ENCODE measurements at regions of chr6 and their contacts with region 1.

Region 1: DNA sequence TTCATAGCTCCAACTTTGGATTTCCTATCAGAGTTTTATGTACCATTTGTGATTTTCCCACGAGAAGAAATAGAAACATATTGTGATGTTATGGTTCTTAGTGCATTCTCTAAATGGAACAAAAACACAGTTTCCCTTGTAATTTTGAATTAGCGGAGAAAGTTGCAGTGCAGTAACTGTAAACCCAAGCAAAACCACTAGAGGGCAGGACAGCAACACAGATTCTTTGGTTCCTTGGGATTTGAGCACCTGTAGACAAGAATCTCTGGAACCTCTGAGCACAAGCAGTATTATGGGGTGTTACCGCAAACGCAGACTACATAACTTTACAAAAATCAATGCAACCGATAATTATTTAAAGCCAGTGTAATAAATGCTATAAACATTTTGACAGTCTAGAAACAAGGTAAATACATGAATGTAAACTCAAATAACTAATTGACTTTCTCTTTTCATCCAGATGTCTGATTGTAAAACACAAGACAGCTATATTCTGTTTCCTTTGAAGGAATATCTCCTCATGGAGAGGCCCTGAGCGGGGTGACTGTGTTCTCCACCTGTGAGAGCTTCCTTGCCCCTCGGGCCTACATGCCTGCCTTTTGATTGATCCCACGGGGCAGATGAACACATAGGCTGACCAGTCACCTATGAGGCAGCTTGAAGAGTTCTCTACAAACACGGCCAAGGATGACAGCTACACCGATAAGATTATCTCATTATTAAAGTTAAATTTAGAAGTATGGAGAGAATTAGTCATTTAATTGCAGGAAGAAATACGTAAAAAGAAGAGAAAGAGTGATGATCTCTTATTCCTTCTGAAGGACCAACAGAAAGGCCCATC is 67.5 kb upstream of the COL21A1 start:
- DNase-seq: no peak
- H3K4me3 ChIP-seq: no peak overlapping the region
- H3K27ac ChIP-seq: no peak overlapping the region
- H3K4me1 ChIP-seq: peaks cover 0 to 9% (median 0%) of the 10 kb centered on the region in 4 donors
- H3K27me3 ChIP-seq: no peaks in the 10 kb centered on the region
- CTCF ChIP-seq: peak; percentile 38 to 68 (median 64)
- EP300 ChIP-seq: no peak
- POLR2A ChIP-seq: no peak

Region 2: GRCh38 chr6:56246881-56247653 is 67.8 kb before region 1 on chr6 and contains the start of gene COL21A1:
- in situ Hi-C with region 1: no loop called
- intact Hi-C with region 1: no loop called
- DNase-seq: peak; percentile 17
- H3K4me3 ChIP-seq: peak within 1 kb of the TSS; percentile 8 to 46 (median 28)
- H3K27ac ChIP-seq: peak within 1 kb of the TSS; percentile 6 to 65 (median 33)
- H3K4me1 ChIP-seq: peaks cover 0 to 13% (median 13%) of the 10 kb centered on the region in 4 donors
- H3K27me3 ChIP-seq: peaks cover 10% of the 10 kb centered on the region
- CTCF ChIP-seq: no peak
- EP300 ChIP-seq: no peak
- POLR2A ChIP-seq: no peak
- total RNA-seq, gene COL21A1: 0.40 to 5.7 (median 3.3) TPM

Region 3: GRCh38 chr6:56292505-56293181 is 22.3 kb before region 1 on chr6:
- in situ Hi-C with region 1: no loop called
- intact Hi-C with region 1: no loop called
- DNase-seq: peak; percentile 9
- H3K4me3 ChIP-seq: no peak overlapping the region
- H3K27ac ChIP-seq: no peak overlapping the region
- H3K4me1 ChIP-seq: no peaks in the 10 kb centered on the region
- H3K27me3 ChIP-seq: no peaks in the 10 kb centered on the region
- CTCF ChIP-seq: peak; percentile 46 to 65 (median 61)
- EP300 ChIP-seq: no peak
- POLR2A ChIP-seq: no peak

Region 4: GRCh38 chr6:56359201-56359899 is 44.4 kb after region 1 on chr6:
- in situ Hi-C with region 1: no loop called
- intact Hi-C with region 1: loop called (anchors 2 kb)
- DNase-seq: peak; percentile 66
- H3K4me3 ChIP-seq: no peak overlapping the region
- H3K27ac ChIP-seq: no peak overlapping the region
- H3K4me1 ChIP-seq: peaks cover 0 to 8% (median 3%) of the 10 kb centered on the region in 4 donors
- H3K27me3 ChIP-seq: no peaks in the 10 kb centered on the region
- CTCF ChIP-seq: peak; percentile 72 to 89 (median 81)
- EP300 ChIP-seq: no peak
- POLR2A ChIP-seq: no peak

Region 5: GRCh38 chr6:56911847-56912246 is 596.9 kb after region 1 on chr6:
- in situ Hi-C with region 1: no loop called
- intact Hi-C with region 1: no loop called
- DNase-seq: no peak
- H3K4me3 ChIP-seq: no peak overlapping the region
- H3K27ac ChIP-seq: no peak overlapping the region
- H3K4me1 ChIP-seq: peaks cover 0 to 7% (median 0%) of the 10 kb centered on the region in 4 donors
- H3K27me3 ChIP-seq: no peaks in the 10 kb centered on the region
- CTCF ChIP-seq: no peak
- EP300 ChIP-seq: no peak
- POLR2A ChIP-seq: no peak